ENCODE measurements at regions of chr21 and their contacts with region 1.

Region 1: GRCh38 chr21:33360881-33361602 is 36.3 kb downstream of the IFNAR1 start:
- DNase-seq: peak; percentile 90
- ATAC-seq: peak; percentile 82
- H3K4me3 Mint-ChIP-seq: peak overlapping the region; percentile 71
- H3K27ac Mint-ChIP-seq: peak overlapping the region; percentile 73
- H3K4me1 Mint-ChIP-seq: peaks cover 22% of the 10 kb centered on the region
- H3K27me3 Mint-ChIP-seq: no peaks in the 10 kb centered on the region

Region 2: GRCh38 chr21:33205476-33205875 is 155.6 kb before region 1 on chr21:
- CTCF ChIA-PET with region 1: interaction called, 12 read pairs
- DNase-seq: peak; percentile 73
- ATAC-seq: peak; percentile 70
- H3K4me3 Mint-ChIP-seq: peak overlapping the region; percentile 67
- H3K27ac Mint-ChIP-seq: peak overlapping the region; percentile 91
- H3K4me1 Mint-ChIP-seq: peaks cover 33% of the 10 kb centered on the region
- H3K27me3 Mint-ChIP-seq: no peaks in the 10 kb centered on the region

Region 3: GRCh38 chr21:33256019-33256418 is 105.0 kb before region 1 on chr21:
- CTCF ChIA-PET with region 1: interaction called, 10 read pairs
- DNase-seq: no peak
- ATAC-seq: no peak
- H3K4me3 Mint-ChIP-seq: no peak overlapping the region
- H3K27ac Mint-ChIP-seq: no peak overlapping the region
- H3K4me1 Mint-ChIP-seq: peaks cover 26% of the 10 kb centered on the region
- H3K27me3 Mint-ChIP-seq: no peaks in the 10 kb centered on the region

Region 4: GRCh38 chr21:33332143-33332542 is 28.9 kb before region 1 on chr21:
- CTCF ChIA-PET with region 1: interaction called, 22 read pairs
- DNase-seq: peak; percentile 57
- ATAC-seq: peak; percentile 72
- H3K4me3 Mint-ChIP-seq: peak overlapping the region; percentile 8
- H3K27ac Mint-ChIP-seq: peak overlapping the region; percentile 62
- H3K4me1 Mint-ChIP-seq: peaks cover 39% of the 10 kb centered on the region
- H3K27me3 Mint-ChIP-seq: no peaks in the 10 kb centered on the region

Region 5: GRCh38 chr21:33380483-33380998 is 19.5 kb after region 1 on chr21:
- CTCF ChIA-PET with region 1: interaction called, 62 read pairs
- DNase-seq: peak; percentile 91
- ATAC-seq: peak; percentile 87
- H3K4me3 Mint-ChIP-seq: no peak overlapping the region
- H3K27ac Mint-ChIP-seq: peak overlapping the region; percentile 52
- H3K4me1 Mint-ChIP-seq: peaks cover 56% of the 10 kb centered on the region
- H3K27me3 Mint-ChIP-seq: peaks cover 77% of the 10 kb centered on the region